A673 (cell line): ENCODE measurements at regions of chr1 and their contacts with region 1.

Region 1: GRCh38 chr1:163071405-163072255 is 2.5 kb downstream of the RGS4 start:
- DNase-seq: peak; percentile 90
- H3K4me3 ChIP-seq: peak overlapping the region; percentile 40
- H3K27ac ChIP-seq: peak overlapping the region; percentile 10
- H3K4me1 ChIP-seq: peaks cover 47% of the 10 kb centered on the region
- H3K27me3 ChIP-seq: no peaks in the 10 kb centered on the region
- CTCF ChIP-seq: peak; percentile 77

Region 2: DNA sequence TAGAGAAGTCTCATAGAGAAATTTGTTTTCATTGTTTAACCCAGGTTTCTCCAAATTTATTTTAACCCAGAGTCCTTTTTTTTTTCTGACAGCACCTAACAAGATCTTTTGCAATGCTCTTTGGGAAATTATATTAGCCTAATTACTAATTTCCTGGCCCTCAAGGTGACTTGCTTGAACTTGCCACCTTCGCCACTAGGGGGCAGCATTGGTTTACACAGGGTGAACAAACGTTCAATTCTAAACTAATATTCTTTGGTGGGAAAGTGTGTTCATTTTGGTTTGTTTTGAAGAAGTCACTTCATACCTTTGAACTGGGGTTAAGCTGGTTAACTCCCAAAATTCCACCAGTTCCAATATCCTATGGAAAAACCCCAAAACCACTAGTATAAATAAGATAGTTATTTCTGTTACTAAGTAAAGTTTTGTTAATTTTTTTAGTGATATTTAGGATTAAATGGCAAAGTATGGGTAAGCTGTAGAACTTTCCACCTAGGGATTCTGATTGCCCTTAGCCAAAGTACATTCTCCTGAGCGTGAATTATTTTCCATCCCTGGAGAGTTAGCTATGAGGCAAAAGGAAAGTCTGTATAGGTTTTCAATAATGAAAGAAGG is 223.7 kb before region 1 on chr1:
- CTCF ChIA-PET with region 1: interaction called, 14 read pairs
- POLR2A ChIA-PET with region 1: no interaction called
- intact Hi-C with region 1: no loop called
- DNase-seq: peak; percentile 89
- H3K4me3 ChIP-seq: no peak overlapping the region
- H3K27ac ChIP-seq: peak overlapping the region; percentile 20
- H3K4me1 ChIP-seq: peaks cover 53% of the 10 kb centered on the region
- H3K27me3 ChIP-seq: no peaks in the 10 kb centered on the region
- CTCF ChIP-seq: peak; percentile 94

Region 3: GRCh38 chr1:162854245-162854882 is 217.3 kb before region 1 on chr1:
- CTCF ChIA-PET with region 1: interaction called, 16 read pairs
- POLR2A ChIA-PET with region 1: no interaction called
- intact Hi-C with region 1: loop called (anchors 2 kb)
- DNase-seq: peak; percentile 88
- H3K4me3 ChIP-seq: no peak overlapping the region
- H3K27ac ChIP-seq: peak overlapping the region; percentile 43
- H3K4me1 ChIP-seq: peaks cover 25% of the 10 kb centered on the region
- H3K27me3 ChIP-seq: no peaks in the 10 kb centered on the region
- CTCF ChIP-seq: peak; percentile 95

Region 4: GRCh38 chr1:162878000-162878596 is 193.5 kb before region 1 on chr1:
- CTCF ChIA-PET with region 1: interaction called, 32 read pairs
- POLR2A ChIA-PET with region 1: no interaction called
- intact Hi-C with region 1: loop called (anchors 1 kb)
- DNase-seq: peak; percentile 87
- H3K4me3 ChIP-seq: no peak overlapping the region
- H3K27ac ChIP-seq: no peak overlapping the region
- H3K4me1 ChIP-seq: no peaks in the 10 kb centered on the region
- H3K27me3 ChIP-seq: no peaks in the 10 kb centered on the region
- CTCF ChIP-seq: peak; percentile 91

Region 5: DNA sequence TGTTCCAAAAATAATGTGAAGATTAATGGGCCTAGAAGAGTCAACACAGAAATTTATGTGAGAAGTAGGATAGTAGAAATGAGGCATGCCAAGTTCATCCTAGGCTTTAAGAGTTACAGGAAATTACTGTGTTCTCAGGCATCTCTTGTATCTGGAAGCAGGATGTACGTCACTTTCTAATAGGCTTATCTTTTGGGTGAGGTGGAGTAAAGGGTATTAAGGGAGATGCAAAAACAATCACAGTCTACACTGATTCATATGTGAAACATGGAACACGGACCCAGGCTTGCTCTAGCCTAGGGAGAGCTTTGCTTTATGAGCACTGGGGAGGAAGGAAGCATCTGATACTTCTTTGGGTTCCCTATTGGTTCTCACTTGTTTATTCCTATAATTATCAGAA is 86.9 kb before region 1 on chr1:
- CTCF ChIA-PET with region 1: no interaction called
- POLR2A ChIA-PET with region 1: no interaction called
- intact Hi-C with region 1: loop called (anchors 5 kb)
- DNase-seq: peak; percentile 89
- H3K4me3 ChIP-seq: no peak overlapping the region
- H3K27ac ChIP-seq: peak overlapping the region; percentile 55
- H3K4me1 ChIP-seq: peaks cover 6% of the 10 kb centered on the region
- H3K27me3 ChIP-seq: no peaks in the 10 kb centered on the region
- CTCF ChIP-seq: no peak

Region 6: DNA sequence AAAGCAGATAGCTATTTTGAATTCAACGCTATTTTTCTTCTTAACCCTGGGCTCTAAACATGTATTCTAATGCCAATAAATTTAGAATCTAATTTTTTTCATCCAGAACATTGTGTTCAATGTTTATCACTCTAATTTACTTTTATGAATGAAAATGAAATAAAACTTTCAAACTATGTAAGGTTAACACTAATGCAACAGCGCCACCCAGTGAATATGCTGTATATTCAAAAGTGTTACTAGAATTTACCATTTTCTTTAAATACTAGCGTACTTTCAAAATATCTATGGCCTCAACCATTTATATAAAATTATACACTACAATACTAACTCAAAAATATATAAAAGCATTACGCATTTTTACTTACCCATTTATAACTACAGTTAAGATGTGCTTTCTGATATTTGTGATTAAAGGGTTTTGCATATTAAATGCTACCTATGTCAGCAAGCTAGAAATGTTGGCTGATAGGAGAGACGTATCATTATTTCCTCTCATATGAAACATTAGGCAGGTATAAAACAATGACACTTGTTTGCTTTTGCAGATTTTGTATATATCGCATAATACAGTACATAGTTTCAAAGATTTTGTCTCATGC is 244.2 kb after region 1 on chr1:
- CTCF ChIA-PET with region 1: interaction called, 15 read pairs
- POLR2A ChIA-PET with region 1: no interaction called
- intact Hi-C with region 1: loop called (anchors 1 kb)
- DNase-seq: peak; percentile 62
- H3K4me3 ChIP-seq: no peak overlapping the region
- H3K27ac ChIP-seq: no peak overlapping the region
- H3K4me1 ChIP-seq: peaks cover 4% of the 10 kb centered on the region
- H3K27me3 ChIP-seq: no peaks in the 10 kb centered on the region
- CTCF ChIP-seq: peak; percentile 87